Ascending aorta (tissue), 2 donors: ENCODE measurements at regions of chr6 and their contacts with region 1.

Region 1: GRCh38 chr6:124659427-124659826 is 302.8 kb upstream of the RNF217 start:
- DNase-seq: no peak
- H3K4me3 ChIP-seq: no peak overlapping the region
- H3K27ac ChIP-seq: no peak overlapping the region
- H3K4me1 ChIP-seq: no peaks in the 10 kb centered on the region
- H3K27me3 ChIP-seq: no peaks in the 10 kb centered on the region
- CTCF ChIP-seq: no peak

Region 2: DNA sequence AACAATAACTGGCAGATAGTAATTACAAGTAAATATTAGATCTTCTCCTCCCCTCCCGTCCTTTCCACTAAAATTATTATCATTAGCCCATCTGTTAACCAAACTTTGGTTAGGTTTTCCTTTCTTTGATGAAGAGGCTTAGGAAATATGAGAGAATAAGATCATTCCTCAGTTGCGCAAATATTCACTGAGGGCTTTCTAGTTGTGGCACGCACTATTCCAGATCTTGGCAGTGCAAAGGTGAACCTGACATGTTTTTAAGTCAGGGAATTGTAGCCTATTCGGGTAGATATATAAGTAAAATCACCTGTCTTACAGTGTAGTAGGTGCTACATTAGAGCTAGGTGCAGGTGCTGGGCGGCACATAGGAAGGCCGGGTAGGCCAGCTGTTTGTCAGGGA is 333.9 kb after region 1 on chr6:
- intact Hi-C with region 1: loop called (anchors 5 kb)
- DNase-seq: no peak
- H3K4me3 ChIP-seq: no peak overlapping the region
- H3K27ac ChIP-seq: no peak overlapping the region
- H3K4me1 ChIP-seq: peaks cover 0 to 4% of the 10 kb centered on the region in 2 donors
- H3K27me3 ChIP-seq: no peaks in the 10 kb centered on the region
- CTCF ChIP-seq: no peak